ENCODE measurements at regions of chr10 and their contacts with region 1.

Region 1: DNA sequence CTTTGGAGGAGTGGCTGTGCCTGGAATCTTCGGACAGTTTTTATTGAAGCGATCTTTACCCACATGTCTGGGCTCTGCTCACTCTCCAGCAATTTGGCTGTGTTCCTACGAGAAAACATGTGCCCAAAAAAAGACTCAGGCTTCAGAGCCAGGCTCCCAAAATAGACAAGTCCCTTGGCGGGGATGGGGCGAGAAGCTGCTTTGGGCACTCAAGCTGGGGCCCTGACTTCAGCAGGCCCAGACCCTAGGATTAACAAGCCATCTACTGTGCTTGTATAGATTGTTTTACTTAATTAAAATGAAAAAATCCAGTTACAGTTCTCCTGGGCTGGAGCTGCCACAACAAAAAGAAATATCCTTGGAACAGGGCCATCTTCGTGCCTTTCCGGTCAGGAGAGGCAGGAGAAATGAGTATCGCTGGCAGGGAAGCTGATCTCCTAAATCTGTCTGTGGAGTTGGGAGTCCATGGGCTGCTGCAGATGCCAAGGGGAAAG is 51.4 kb upstream of the PDCD4 start:
- DNase-seq: no peak
- H3K4me3 ChIP-seq: no peak overlapping the region
- H3K27ac ChIP-seq: peak overlapping the region; percentile 80 to 87 (median 83)
- H3K4me1 ChIP-seq: peaks cover 47 to 75% (median 66%) of the 10 kb centered on the region in 4 donors
- H3K27me3 ChIP-seq: no peaks in the 10 kb centered on the region
- CTCF ChIP-seq: peak in 1 of 5 experiments; percentile 19
- EP300 ChIP-seq: peak; percentile 24
- POLR2A ChIP-seq: no peak

Region 2: DNA sequence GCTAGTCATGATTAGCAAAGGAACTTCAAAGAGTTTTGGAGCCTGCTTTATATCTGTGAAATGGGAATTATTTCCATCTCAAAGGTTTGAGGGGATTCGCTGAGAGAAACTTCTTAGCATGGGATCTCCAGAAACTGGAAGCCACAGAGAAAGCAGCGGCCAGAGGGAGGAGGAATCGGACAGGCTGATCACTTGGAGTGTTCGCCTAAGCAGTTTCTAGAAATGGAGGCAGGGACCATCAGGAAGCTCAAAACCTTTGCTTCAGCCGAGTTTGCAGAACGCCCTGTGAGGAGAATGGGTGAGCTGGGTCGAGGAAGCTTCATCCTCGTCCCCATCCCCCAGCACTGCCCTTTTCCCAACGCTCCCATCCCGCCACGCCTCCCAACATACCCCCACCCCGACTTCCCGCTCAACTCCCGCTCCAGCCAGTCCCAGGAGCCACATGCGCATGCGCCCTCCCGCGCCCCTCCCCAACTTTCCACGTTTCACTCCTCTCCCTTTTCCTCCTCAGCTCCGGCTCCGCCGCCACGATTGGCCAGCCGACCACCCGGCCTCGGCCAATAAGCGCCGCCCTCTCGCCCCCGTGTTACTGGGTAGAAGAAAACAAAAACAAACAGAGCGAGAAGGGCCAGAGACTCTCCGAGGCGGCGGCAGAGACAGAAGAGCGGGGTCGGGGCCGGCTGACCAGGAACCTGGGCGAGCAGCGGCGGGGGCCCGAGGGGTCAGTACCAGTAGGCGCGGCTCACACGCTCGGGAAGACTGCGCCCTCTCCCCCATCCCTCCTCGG is 51.1 kb after region 1 on chr10 and contains the start of gene PDCD4:
- in situ Hi-C with region 1: no loop called
- intact Hi-C with region 1: loop called (anchors 10 kb)
- DNase-seq: peak; percentile 100
- H3K4me3 ChIP-seq: peak within 1 kb of the TSS; percentile 79 to 97 (median 88)
- H3K27ac ChIP-seq: peak within 1 kb of the TSS; percentile 99 to 100 (median 99)
- H3K4me1 ChIP-seq: peaks cover 14 to 71% (median 42%) of the 10 kb centered on the region in 4 donors
- H3K27me3 ChIP-seq: no peaks in the 10 kb centered on the region
- CTCF ChIP-seq: no peak
- EP300 ChIP-seq: no peak
- POLR2A ChIP-seq: peak; percentile 99
- total RNA-seq, gene PDCD4: 98.3 to 724 (median 511) TPM

Region 3: GRCh38 chr10:110977662-110978061 is 157.3 kb after region 1 on chr10:
- in situ Hi-C with region 1: no loop called
- intact Hi-C with region 1: no loop called
- DNase-seq: no peak
- H3K4me3 ChIP-seq: no peak overlapping the region
- H3K27ac ChIP-seq: no peak overlapping the region
- H3K4me1 ChIP-seq: peaks cover 0 to 11% (median 6%) of the 10 kb centered on the region in 4 donors
- H3K27me3 ChIP-seq: no peaks in the 10 kb centered on the region
- CTCF ChIP-seq: no peak
- EP300 ChIP-seq: no peak
- POLR2A ChIP-seq: no peak

Measured in transverse colon (tissue), 4 donors.